ENCODE measurements at regions of chr10 and their contacts with region 1.

Region 1: GRCh38 chr10:43292755-43293676 is 26.2 kb upstream of the RASGEF1A start:
- DNase-seq: no peak
- H3K4me3 ChIP-seq: no peak overlapping the region
- H3K27ac ChIP-seq: no peak overlapping the region
- H3K4me1 ChIP-seq: no peaks in the 10 kb centered on the region
- H3K27me3 ChIP-seq: no peaks in the 10 kb centered on the region
- CTCF ChIP-seq: peak; percentile 19 to 73 (median 60)
- POLR2A ChIP-seq: no peak

Region 2: DNA sequence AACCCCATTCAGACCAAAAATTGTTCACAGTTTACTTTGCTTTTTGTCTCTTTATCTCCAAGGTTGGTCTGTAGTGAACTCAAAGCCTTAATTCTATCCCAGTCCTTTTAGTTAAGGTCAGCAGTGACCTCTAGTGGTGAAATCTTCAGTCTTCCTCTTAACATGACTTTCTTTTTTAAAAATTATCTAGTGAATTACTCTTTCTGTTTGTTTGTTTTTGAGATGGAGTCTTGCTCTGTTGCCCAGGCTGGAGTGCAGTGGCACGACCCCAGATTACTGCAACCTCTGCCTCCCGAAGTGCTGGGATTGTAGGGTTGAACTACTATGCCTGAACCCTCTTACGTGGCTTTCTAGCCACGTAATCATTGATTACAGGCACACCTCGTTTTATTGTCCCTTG is 168.9 kb after region 1 on chr10:
- intact Hi-C with region 1: loop called (anchors 5 kb)
- DNase-seq: no peak
- H3K4me3 ChIP-seq: no peak overlapping the region
- H3K27ac ChIP-seq: no peak overlapping the region
- H3K4me1 ChIP-seq: no peaks in the 10 kb centered on the region
- H3K27me3 ChIP-seq: no peaks in the 10 kb centered on the region
- CTCF ChIP-seq: peak; percentile 56 to 78 (median 67)
- POLR2A ChIP-seq: no peak

Region 3: DNA sequence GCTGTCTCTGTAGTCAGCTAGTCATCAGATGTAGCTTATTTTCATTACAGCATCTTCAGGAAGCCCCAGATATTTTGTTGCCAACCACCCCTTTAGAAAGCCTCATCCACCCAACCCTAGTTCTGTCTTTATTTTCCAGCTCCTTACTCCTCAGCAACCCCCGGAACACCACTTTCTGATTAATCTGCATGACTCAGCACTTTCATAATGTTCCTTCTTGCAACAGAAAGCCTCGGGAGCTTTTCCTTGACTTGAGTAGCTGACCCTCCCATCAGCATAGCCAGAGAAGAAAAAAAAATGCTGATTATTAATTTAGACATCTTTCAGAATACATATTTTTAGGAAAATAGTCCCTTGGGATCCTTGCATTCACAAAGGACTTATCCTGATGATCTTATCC is 1335.9 kb after region 1 on chr10:
- intact Hi-C with region 1: no loop called
- DNase-seq: no peak
- H3K4me3 ChIP-seq: no peak overlapping the region
- H3K27ac ChIP-seq: no peak overlapping the region
- H3K4me1 ChIP-seq: peaks cover 5% of the 10 kb centered on the region
- H3K27me3 ChIP-seq: no peaks in the 10 kb centered on the region
- CTCF ChIP-seq: no peak
- POLR2A ChIP-seq: no peak